Right ventricle myocardium inferior (tissue), 1 donor: ENCODE measurements at regions of chr5 and their contacts with region 1.

Region 1: DNA sequence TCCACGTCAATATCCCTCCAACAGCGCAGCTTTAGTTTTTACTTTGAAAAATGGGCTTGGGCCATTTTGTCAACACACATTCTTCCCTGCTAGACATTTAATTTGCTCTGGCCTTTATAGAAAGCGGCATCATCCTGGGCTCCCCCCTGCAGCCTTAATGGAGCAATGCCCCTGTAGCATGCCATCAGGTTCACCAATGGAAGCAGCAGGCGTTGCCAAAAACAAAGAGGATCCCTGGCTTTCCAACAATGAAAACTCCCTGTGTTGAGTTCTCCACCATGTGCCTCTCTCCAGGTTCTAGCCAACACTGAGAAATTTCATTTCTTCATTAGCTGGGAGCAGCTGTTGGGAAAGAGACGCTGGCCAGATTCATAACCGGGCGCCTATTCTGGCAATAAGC is 139.5 kb downstream of the ZNF622 start:
- DNase-seq: no peak
- ATAC-seq: no peak

Region 2: DNA sequence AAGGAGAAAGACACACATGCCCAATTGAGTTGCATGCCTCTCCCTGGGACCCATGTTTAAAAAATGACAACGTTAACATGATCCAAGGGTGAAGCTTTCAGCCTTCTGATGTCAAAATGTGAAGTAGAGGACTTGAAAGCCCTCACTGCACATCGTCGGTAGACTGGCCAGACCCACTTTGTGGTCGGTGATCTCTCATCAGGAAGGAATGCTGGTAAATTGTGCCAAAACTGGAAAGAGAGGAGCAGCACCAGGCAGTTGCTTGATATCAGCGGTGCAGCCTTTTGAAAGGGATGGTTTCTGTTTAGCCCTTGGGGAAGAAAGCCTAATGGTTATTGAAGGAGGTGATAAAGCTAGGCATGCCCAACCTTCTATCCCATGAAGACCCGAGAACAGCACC is 21.3 kb before region 1 on chr5:
- intact Hi-C with region 1: loop called (anchors 2 kb)
- DNase-seq: no peak
- ATAC-seq: no peak